GM12878 (cell line): ENCODE measurements at regions of chr11 and their contacts with region 1.

Region 1: GRCh38 chr11:34468209-34468841 is 29.6 kb downstream of the CAT start:
- DNase-seq: no peak
- ATAC-seq: peak; percentile 62
- H3K4me3 ChIP-seq: no peak overlapping the region
- H3K27ac ChIP-seq: no peak overlapping the region
- H3K4me1 ChIP-seq: no peaks in the 10 kb centered on the region
- H3K27me3 ChIP-seq: no peaks in the 10 kb centered on the region
- CTCF ChIP-seq: peak; percentile 55 to 73 (median 67)
- EP300 ChIP-seq: no peak
- POLR2A ChIP-seq: no peak
- RAD21 ChIP-seq: peak; percentile 67

Region 2: GRCh38 chr11:34266090-34266912 is 202.0 kb before region 1 on chr11:
- CTCF ChIA-PET with region 1: no interaction called
- POLR2A ChIA-PET with region 1: no interaction called
- RAD21 ChIA-PET with region 1: no interaction called
- SMC1A ChIA-PET with region 1: no interaction called
- in situ Hi-C with region 1: no loop called
- intact Hi-C with region 1: no loop called
- DNase-seq: no peak
- ATAC-seq: no peak
- H3K4me3 ChIP-seq: no peak overlapping the region
- H3K27ac ChIP-seq: no peak overlapping the region
- H3K4me1 ChIP-seq: no peaks in the 10 kb centered on the region
- H3K27me3 ChIP-seq: no peaks in the 10 kb centered on the region
- CTCF ChIP-seq: no peak
- EP300 ChIP-seq: no peak
- POLR2A ChIP-seq: no peak
- RAD21 ChIP-seq: no peak

Region 3: GRCh38 chr11:34380696-34381095 is 87.6 kb before region 1 on chr11:
- CTCF ChIA-PET with region 1: no interaction called
- POLR2A ChIA-PET with region 1: no interaction called
- RAD21 ChIA-PET with region 1: no interaction called
- SMC1A ChIA-PET with region 1: no interaction called
- in situ Hi-C with region 1: no loop called
- intact Hi-C with region 1: no loop called
- DNase-seq: no peak
- ATAC-seq: no peak
- H3K4me3 ChIP-seq: no peak overlapping the region
- H3K27ac ChIP-seq: no peak overlapping the region
- H3K4me1 ChIP-seq: no peaks in the 10 kb centered on the region
- H3K27me3 ChIP-seq: no peaks in the 10 kb centered on the region
- CTCF ChIP-seq: no peak
- EP300 ChIP-seq: no peak
- POLR2A ChIP-seq: no peak
- RAD21 ChIP-seq: no peak

Region 4: DNA sequence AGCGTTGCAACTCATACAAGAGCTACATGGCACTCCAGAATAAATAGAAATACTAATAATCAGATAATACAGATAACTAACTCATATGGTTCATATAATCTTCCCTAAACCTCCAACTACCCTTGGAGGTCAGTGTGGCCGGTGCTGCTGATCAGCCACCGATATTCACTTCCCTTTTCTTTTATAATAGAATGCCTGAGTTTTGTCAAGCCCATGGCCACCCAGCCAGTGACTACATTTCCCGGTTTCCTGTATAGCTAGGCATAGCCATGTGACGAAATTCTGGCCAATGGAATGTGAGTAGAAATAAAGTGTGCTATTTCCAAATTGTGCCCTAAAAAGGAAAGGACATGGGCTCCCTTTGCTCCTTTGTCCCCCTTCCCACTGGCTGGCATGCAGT is 35.5 kb before region 1 on chr11:
- CTCF ChIA-PET with region 1: interaction called, 14 read pairs
- POLR2A ChIA-PET with region 1: no interaction called
- RAD21 ChIA-PET with region 1: no interaction called
- SMC1A ChIA-PET with region 1: interaction called, 3 read pairs
- in situ Hi-C with region 1: no loop called
- intact Hi-C with region 1: no loop called
- DNase-seq: no peak
- ATAC-seq: no peak
- H3K4me3 ChIP-seq: no peak overlapping the region
- H3K27ac ChIP-seq: no peak overlapping the region
- H3K4me1 ChIP-seq: no peaks in the 10 kb centered on the region
- H3K27me3 ChIP-seq: no peaks in the 10 kb centered on the region
- CTCF ChIP-seq: no peak
- EP300 ChIP-seq: no peak
- POLR2A ChIP-seq: no peak
- RAD21 ChIP-seq: no peak

Region 5: GRCh38 chr11:34438529-34439507 is 29.5 kb before region 1 on chr11 and contains the start of gene CAT:
- CTCF ChIA-PET with region 1: interaction called, 14 read pairs
- POLR2A ChIA-PET with region 1: interaction called, 3 read pairs
- RAD21 ChIA-PET with region 1: interaction called, 3 read pairs
- SMC1A ChIA-PET with region 1: interaction called, 9 read pairs
- in situ Hi-C with region 1: no loop called
- intact Hi-C with region 1: no loop called
- DNase-seq: peak; percentile 93
- ATAC-seq: peak; percentile 98
- H3K4me3 ChIP-seq: peak within 1 kb of the TSS; percentile 86
- H3K27ac ChIP-seq: peak within 1 kb of the TSS; percentile 91
- H3K4me1 ChIP-seq: peaks cover 17% of the 10 kb centered on the region
- H3K27me3 ChIP-seq: no peaks in the 10 kb centered on the region
- CTCF ChIP-seq: no peak
- EP300 ChIP-seq: no peak
- POLR2A ChIP-seq: peak; percentile 94
- RAD21 ChIP-seq: no peak
- polyA plus RNA-seq, gene CAT: 25.1 to 30.5 TPM

Region 6: GRCh38 chr11:34449013-34449412 is 19.3 kb before region 1 on chr11:
- CTCF ChIA-PET with region 1: interaction called, 11 read pairs
- POLR2A ChIA-PET with region 1: interaction called, 4 read pairs
- RAD21 ChIA-PET with region 1: no interaction called
- SMC1A ChIA-PET with region 1: interaction called, 7 read pairs
- in situ Hi-C with region 1: no loop called
- intact Hi-C with region 1: no loop called
- DNase-seq: no peak
- ATAC-seq: peak; percentile 52
- H3K4me3 ChIP-seq: no peak overlapping the region
- H3K27ac ChIP-seq: no peak overlapping the region
- H3K4me1 ChIP-seq: peaks cover 17% of the 10 kb centered on the region
- H3K27me3 ChIP-seq: no peaks in the 10 kb centered on the region
- CTCF ChIP-seq: no peak
- EP300 ChIP-seq: no peak
- POLR2A ChIP-seq: no peak
- RAD21 ChIP-seq: no peak

Region 7: DNA sequence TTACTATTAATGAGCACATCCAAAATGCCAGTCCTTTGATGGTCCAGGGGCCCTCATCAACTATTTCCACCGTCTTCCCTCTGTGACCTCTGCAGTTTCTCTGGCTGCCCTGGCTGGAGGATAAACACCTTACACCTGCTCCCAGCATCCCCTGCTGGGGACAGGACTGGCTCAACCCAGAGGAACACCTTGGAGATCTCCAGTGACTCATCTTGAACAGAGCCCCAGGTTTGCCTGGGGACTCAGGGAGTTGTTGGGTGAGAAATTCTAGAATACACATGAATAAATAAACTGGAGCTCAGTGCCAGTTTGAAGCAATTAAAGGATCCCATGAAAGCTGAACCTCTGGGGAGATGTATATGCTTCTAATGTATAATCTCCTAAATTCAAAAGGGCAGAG is 69.3 kb after region 1 on chr11:
- CTCF ChIA-PET with region 1: no interaction called
- POLR2A ChIA-PET with region 1: no interaction called
- RAD21 ChIA-PET with region 1: no interaction called
- SMC1A ChIA-PET with region 1: no interaction called
- in situ Hi-C with region 1: no loop called
- intact Hi-C with region 1: no loop called
- DNase-seq: no peak
- ATAC-seq: no peak
- H3K4me3 ChIP-seq: no peak overlapping the region
- H3K27ac ChIP-seq: no peak overlapping the region
- H3K4me1 ChIP-seq: no peaks in the 10 kb centered on the region
- H3K27me3 ChIP-seq: peaks cover 0 to 2% of the 10 kb centered on the region in 2 experiments; a peak in 2 of 4 replicates
- CTCF ChIP-seq: no peak
- EP300 ChIP-seq: no peak
- POLR2A ChIP-seq: no peak
- RAD21 ChIP-seq: no peak